A673 (cell line): ENCODE measurements at regions of chr4 and their contacts with region 1.

Region 1: GRCh38 chr4:129008096-129008495 is 85.2 kb downstream of the SCLT1 start:
- DNase-seq: no peak
- H3K4me3 ChIP-seq: no peak overlapping the region
- H3K27ac ChIP-seq: no peak overlapping the region
- H3K4me1 ChIP-seq: no peaks in the 10 kb centered on the region
- H3K27me3 ChIP-seq: no peaks in the 10 kb centered on the region
- CTCF ChIP-seq: no peak

Region 2: DNA sequence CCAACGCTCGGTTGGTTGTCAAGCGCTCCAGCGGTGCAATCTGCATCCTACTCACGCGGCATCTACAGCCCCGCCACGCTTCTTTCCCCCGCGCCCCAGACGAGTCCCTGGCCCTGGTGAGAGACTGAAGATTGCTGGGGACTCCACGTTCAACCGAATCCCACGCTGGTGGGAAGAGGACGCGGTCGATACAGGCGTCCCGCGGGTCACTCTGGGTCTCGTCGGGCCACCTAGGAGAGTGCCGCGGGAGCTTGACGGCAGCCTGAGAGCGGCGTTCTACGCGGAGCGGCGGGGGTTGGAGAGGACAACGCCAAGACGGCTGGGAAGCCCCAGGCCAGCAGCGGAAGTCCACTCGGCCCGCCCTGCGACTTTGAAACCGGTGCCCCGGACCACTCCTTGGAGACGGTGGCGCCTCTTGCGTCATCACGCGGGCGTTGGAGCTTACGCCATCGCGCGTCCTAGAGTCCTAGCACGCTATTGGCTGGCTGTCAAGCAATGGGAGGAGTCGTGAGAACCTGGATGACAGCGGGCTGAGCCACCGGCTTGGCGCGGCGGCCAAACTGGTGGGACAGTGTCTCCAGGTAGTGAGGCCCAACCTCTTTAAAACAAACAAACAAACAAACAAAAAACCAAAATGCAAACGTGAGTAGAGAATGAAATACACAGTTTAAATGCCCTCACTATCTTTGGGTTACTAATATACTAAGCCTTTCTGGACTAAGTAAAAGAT is 85.3 kb after region 1 on chr4 and contains the start of gene SCLT1:
- CTCF ChIA-PET with region 1: no interaction called
- POLR2A ChIA-PET with region 1: no interaction called
- intact Hi-C with region 1: loop called (anchors 5 kb)
- DNase-seq: peak; percentile 98
- H3K4me3 ChIP-seq: peak within 1 kb of the TSS; percentile 73
- H3K27ac ChIP-seq: peak within 1 kb of the TSS; percentile 84
- H3K4me1 ChIP-seq: peaks cover 13% of the 10 kb centered on the region
- H3K27me3 ChIP-seq: no peaks in the 10 kb centered on the region
- CTCF ChIP-seq: no peak
- total RNA-seq, gene SCLT1: 24.1 and 26.7 TPM in 2 replicates

Region 3: GRCh38 chr4:129254098-129254497 is 246.0 kb after region 1 on chr4:
- CTCF ChIA-PET with region 1: no interaction called
- POLR2A ChIA-PET with region 1: no interaction called
- intact Hi-C with region 1: no loop called
- DNase-seq: no peak
- H3K4me3 ChIP-seq: no peak overlapping the region
- H3K27ac ChIP-seq: no peak overlapping the region
- H3K4me1 ChIP-seq: no peaks in the 10 kb centered on the region
- H3K27me3 ChIP-seq: no peaks in the 10 kb centered on the region
- CTCF ChIP-seq: no peak

Region 4: DNA sequence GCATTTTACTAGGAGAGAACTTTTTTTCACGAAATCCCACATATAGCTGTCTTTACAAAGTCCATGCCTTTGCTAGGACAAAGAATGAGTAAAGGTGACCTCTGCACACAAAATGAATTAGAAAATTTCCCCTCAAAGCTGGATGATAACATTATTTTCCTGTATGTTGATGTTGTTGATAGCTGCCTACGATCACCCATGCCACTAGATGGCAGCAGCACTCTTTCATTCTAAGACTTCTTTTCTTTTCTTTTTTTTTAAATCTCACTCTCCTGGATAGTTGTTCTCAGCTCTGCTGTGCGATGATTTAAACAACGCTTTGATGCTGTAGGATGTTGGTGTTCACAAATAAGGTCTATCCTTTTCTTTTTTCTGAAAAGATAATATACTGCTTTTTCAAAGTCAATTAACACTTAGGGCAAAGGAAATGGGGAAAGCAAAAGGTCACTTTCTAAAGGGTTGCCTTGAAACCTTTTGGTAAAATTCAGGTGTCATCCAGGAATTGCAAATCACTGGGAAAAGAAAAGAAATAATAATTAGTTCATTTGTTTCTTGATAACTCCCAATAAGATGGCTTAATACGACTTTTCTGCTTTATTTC is 354.7 kb after region 1 on chr4:
- CTCF ChIA-PET with region 1: no interaction called
- POLR2A ChIA-PET with region 1: no interaction called
- intact Hi-C with region 1: no loop called
- DNase-seq: peak; percentile 76
- H3K4me3 ChIP-seq: no peak overlapping the region
- H3K27ac ChIP-seq: no peak overlapping the region
- H3K4me1 ChIP-seq: no peaks in the 10 kb centered on the region
- H3K27me3 ChIP-seq: no peaks in the 10 kb centered on the region
- CTCF ChIP-seq: peak; percentile 88